Dendritic cell treated with granulocyte-macrophage colony-stimulating factor and Interleukin-4, amounts not matched to agents 40 ng/mL and 50 ng/mL, for 4 days (primary cell): ENCODE measurements at regions of chr19 and their contacts with region 1.

Region 1: DNA sequence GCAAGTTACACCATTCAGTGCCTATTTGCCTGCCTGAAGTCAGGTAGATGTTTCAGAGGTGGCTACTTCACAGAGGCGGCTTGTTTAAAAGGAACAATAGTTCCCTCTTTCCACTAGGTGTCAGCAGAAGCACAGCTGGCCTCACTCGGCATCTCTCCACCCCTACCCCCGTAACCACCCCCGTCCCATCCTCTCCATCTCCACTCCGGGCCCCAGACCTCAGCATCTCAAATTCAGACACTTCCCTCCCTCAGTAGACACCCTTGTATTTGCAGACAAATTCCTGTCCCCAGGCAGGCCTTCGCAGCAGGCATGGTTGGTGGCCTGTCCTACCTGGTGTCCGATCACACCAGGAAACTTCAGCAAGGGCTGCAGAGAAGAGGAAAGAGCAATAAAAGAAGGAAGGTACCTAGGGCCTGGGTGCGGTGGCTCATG is 9.1 kb upstream of the DPP9 start:
- H3K4me3 Mint-ChIP-seq: no peak overlapping the region
- H3K27ac Mint-ChIP-seq: no peak overlapping the region
- H3K4me1 Mint-ChIP-seq: peaks cover 15% of the 10 kb centered on the region
- H3K27me3 Mint-ChIP-seq: peaks cover 32% of the 10 kb centered on the region

Region 2: DNA sequence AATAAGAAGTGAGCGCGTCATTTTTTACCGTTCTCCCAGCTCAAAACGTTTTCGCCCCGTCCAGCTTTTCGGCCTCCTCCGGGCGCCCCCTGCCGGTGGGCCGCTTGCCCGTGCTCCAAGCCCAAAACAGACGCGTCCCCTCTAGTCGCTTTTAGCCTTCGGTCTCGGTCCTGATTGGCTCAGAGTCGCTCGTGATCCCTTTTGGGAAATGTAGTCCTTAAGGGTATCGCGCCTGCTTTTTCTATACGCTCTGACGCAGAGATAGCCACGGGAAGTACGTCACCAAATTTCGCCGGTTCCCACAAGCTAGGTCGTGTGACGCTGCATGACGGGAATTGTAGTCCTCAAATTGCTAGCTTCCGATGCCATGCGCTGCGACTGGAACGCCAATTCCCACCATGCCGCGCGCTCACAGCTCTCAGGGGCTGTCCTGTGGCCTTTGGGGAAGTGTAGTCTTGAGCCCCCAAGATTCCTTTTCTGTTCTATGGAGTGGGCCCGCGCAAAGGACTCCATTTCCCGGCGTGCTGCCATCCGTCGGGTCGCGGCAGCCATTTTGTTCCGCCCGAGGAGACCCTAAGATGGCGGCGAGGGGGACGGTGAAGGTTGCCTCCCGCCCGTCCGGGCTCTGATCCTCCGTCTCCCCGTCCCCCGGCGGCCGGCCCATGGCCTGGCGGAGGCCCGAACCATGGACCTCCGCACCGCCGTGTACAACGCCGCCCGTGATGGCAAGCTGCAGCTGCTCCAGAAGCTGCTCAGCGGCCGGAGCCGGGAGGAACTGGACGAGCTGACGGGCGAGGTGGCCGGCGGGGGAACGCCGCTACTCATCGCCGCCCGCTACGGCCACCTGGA is 58.7 kb after region 1 on chr19 and contains the start of gene FEM1A:
- intact Hi-C with region 1: loop called (anchors 1 kb)
- H3K4me3 Mint-ChIP-seq: peak within 1 kb of the TSS; percentile 80
- H3K27ac Mint-ChIP-seq: peak within 1 kb of the TSS; percentile 90
- H3K4me1 Mint-ChIP-seq: peaks cover 39% of the 10 kb centered on the region
- H3K27me3 Mint-ChIP-seq: peaks cover 15% of the 10 kb centered on the region

Region 3: GRCh38 chr19:4803736-4804695 is 71.3 kb after region 1 on chr19:
- intact Hi-C with region 1: loop called (anchors 1 kb)
- H3K4me3 Mint-ChIP-seq: no peak overlapping the region
- H3K27ac Mint-ChIP-seq: peak overlapping the region; percentile 21
- H3K4me1 Mint-ChIP-seq: peaks cover 30% of the 10 kb centered on the region
- H3K27me3 Mint-ChIP-seq: no peaks in the 10 kb centered on the region

Region 4: DNA sequence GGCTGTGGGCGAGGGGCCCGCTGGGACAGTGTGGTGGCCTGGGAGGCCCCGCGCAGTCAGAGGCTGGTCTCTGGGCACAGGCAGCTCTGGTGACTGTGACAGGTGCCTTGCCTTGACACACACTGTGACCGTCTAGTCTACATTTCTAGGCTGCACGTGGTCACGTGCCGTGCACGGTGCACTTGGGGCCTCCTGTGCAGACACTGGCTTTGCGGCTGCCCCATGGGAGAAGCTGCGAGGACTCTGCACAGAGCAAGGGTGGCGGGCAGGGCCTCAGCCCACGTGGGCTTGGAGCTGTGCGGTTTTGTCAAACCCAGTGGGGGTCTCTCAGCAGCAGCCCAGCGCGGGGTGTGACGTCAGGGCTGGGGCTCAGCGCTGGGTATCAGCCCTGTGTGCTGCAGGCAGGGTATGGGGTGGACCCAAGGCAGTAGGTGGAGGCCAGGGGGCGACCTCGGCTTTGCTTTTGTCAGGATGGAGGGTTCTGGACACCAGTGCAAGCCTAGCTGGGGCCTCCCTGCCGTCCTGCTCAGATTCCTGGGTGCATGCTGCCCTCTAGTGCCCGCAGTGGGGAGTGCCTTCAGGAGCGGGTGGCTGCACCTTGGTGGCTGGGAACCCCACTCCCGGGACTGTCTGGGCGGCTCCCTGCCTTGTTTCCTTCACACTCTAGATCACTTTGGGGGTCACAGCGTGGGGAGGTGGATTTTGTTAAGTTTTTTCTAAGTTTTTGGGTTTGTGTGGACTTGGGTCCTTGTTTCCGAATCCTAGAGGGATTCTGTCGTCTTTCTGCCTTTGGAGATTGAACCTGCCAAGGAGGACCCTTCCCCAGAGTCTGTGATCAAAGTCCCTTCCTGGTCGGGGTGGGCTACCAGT is 298.8 kb after region 1 on chr19:
- intact Hi-C with region 1: loop called (anchors 10 kb)
- H3K4me3 Mint-ChIP-seq: no peak overlapping the region
- H3K27ac Mint-ChIP-seq: no peak overlapping the region
- H3K4me1 Mint-ChIP-seq: peaks cover 31% of the 10 kb centered on the region
- H3K27me3 Mint-ChIP-seq: no peaks in the 10 kb centered on the region